ENCODE measurements at regions of chr17 and their contacts with region 1.

Region 1: DNA sequence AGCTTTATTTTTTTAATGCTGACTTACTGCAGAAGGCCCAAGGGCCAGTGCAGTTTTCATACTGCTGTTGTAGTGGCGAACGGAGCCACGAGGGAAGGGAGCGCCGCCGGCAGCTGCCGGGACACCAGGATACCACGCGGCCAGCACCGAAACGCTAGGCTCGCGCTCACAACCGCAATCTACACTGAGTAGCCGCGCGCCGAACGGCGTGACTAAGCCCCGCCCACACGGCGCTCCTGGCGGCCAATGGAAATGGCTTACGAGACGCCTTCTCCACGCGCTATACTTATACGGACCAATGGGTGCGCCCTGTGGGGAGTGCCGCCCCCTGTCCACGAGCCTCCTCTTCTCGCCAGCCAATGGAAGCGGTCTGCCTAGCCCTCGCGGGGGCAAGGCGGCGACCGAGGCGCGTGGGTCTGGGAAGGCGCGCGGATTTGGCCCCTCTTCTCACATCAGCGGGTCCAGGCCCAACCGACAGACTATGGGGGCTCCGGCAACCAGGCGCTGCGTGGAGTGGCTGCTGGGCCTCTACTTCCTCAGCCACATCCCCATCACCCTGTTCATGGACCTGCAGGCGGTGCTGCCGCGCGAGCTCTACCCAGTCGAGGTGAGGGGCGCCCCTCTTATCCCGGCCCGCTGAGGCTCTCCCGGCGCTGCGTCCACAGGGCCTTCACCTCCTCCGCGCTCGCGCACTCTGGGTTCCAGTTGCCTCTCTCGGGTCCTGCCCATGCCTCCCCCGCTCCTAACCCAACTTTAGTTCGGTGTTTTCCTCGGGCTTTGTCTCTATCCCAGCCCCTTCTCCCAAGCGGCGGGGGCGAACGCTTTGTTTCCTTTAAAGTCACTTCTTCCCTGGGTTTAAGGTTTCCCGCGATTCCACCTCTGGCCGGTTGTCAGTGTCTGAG is at the start of gene TMEM97:
- DNase-seq: peak; percentile 96
- H3K4me3 Mint-ChIP-seq: peak within 1 kb of the TSS; percentile 96
- H3K27ac Mint-ChIP-seq: peak within 1 kb of the TSS; percentile 94
- H3K4me1 Mint-ChIP-seq: peaks cover 48% of the 10 kb centered on the region
- H3K27me3 Mint-ChIP-seq: no peaks in the 10 kb centered on the region
- total RNA-seq, gene TMEM97: 60.9 and 64.5 TPM in 2 replicates

Region 2: DNA sequence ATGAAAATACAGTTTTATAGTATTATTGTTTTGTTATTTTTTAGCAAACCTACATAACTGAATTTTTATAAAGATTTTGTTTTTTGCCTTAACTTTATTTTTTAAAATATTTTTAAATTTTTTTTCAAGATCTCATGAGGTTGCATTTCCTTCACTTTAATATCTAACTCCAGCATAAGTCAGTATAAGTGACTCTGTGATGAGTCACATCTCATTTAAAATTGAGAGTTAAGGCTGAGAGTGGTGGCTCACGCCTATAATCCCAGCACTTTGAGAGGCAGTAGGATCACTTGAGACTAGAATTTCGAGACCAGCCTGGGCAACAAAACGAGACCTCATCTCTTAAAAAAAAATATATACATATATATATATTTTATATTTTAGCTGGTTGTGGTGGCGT is 232.5 kb before region 1 on chr17:
- intact Hi-C with region 1: no loop called
- DNase-seq: no peak
- H3K4me3 Mint-ChIP-seq: no peak overlapping the region
- H3K27ac Mint-ChIP-seq: no peak overlapping the region
- H3K4me1 Mint-ChIP-seq: peaks cover 12% of the 10 kb centered on the region
- H3K27me3 Mint-ChIP-seq: no peaks in the 10 kb centered on the region

Region 3: DNA sequence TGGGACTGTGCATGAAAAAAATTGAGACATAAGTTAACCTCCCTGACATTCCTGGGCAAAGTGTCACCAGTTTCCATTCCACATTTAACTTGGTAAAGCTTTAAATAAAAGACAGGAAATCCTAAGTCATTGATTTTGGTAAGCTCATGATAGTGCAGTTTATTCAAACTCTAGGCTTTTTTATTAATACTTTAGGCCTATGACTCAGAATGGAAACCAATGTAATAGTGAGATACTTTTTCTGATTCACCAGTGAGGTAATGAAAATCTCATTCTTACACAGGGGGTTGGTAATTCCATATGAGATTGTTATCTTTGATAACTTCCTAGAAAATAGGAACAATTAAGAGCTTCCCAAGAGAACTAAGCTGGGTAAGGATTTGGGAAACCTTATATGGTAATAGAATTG is 185.4 kb before region 1 on chr17:
- intact Hi-C with region 1: no loop called
- DNase-seq: no peak
- H3K4me3 Mint-ChIP-seq: no peak overlapping the region
- H3K27ac Mint-ChIP-seq: no peak overlapping the region
- H3K4me1 Mint-ChIP-seq: no peaks in the 10 kb centered on the region
- H3K27me3 Mint-ChIP-seq: no peaks in the 10 kb centered on the region

Region 4: DNA sequence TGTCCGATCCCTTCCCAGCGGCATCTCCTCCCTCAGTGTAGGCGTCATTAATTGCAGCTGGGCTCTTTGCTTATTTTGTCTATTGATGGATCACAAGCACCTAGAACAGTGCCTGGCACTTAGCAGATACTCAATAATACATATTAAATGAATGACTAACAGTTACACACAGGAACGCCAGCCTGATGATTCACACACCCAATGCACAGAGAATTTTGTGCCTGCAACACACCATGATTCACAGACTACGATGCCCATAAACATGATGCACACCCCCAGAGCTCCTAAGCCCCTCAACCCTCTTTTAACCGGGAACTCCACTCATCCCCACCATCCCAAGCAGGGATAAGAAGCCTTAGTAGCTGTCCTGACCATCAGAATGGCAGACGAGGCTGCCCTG is 66.6 kb before region 1 on chr17:
- intact Hi-C with region 1: loop called (anchors 1 kb)
- DNase-seq: no peak
- H3K4me3 Mint-ChIP-seq: no peak overlapping the region
- H3K27ac Mint-ChIP-seq: no peak overlapping the region
- H3K4me1 Mint-ChIP-seq: peaks cover 8% of the 10 kb centered on the region
- H3K27me3 Mint-ChIP-seq: peaks cover 14% of the 10 kb centered on the region

Region 5: GRCh38 chr17:28295677-28296578 is 23.1 kb before region 1 on chr17:
- intact Hi-C with region 1: loop called (anchors 1 kb)
- DNase-seq: no peak
- H3K4me3 Mint-ChIP-seq: no peak overlapping the region
- H3K27ac Mint-ChIP-seq: peak overlapping the region; percentile 85
- H3K4me1 Mint-ChIP-seq: peaks cover 15% of the 10 kb centered on the region
- H3K27me3 Mint-ChIP-seq: peaks cover 23% of the 10 kb centered on the region

Region 6: GRCh38 chr17:28357061-28357900 is 38.3 kb after region 1 on chr17 and contains the start of gene POLDIP2:
- intact Hi-C with region 1: loop called (anchors 1 kb)
- DNase-seq: peak; percentile 97
- H3K4me3 Mint-ChIP-seq: peak within 1 kb of the TSS; percentile 95
- H3K27ac Mint-ChIP-seq: peak within 1 kb of the TSS; percentile 92
- H3K4me1 Mint-ChIP-seq: peaks cover 32% of the 10 kb centered on the region
- H3K27me3 Mint-ChIP-seq: no peaks in the 10 kb centered on the region
- total RNA-seq, gene POLDIP2: 110 and 114 TPM in 2 replicates

Measured in activated T-helper 1 cell treated with anti-CD3 and anti-CD28 coated beads, Interleukin-12 subunit alpha, Interleukin-12 subunit beta, Interleukin-2, Interleukin-4 antibody, amounts not matched to agents 30 ng/mL and 10 ng/mL and 1 ng/mL, durations not matched to agents 14 hours and 24 hours and 36 hours (primary cell).